ENCODE measurements at regions of chr1 and their contacts with region 1.

Region 1: DNA sequence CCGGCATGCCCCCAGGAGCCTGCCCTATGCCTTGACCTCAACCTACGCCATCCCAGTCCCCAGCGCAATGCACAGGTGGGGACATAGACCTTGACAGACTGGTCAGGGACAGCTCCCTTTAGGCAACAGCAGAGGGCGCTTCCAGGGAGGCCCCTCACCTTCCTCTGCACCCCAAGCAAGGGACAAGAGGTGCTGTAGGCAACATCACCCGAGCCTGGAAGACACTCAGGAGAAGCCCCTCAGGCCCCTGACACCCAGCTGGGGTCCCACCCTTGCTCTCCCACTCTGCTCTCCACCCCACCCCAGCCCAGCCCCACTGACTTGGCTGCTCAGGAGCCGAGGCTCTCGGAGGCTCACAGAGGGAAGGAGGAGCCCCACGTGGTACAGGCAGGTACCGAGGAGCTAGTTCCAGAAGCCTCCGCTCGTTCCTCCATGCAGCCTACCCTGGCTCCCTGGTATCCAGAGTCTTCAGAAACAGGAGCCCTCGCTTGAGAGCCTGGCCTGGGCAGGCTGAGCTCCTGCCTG is 2.4 kb upstream of the WNT3A start:
- DNase-seq: peak in 1 of 2 experiments; percentile 71
- H3K4me3 ChIP-seq: peak overlapping the region in 3 of 4 experiments; percentile 0 to 57 (median 10); a peak in 5 of 8 replicates
- H3K27ac ChIP-seq: no peak overlapping the region
- H3K4me1 ChIP-seq: peaks cover 0 to 43% (median 22%) of the 10 kb centered on the region in 4 experiments; a peak in 6 of 7 replicates
- H3K27me3 ChIP-seq: peaks cover 53 to 94% (median 69%) of the 10 kb centered on the region in 4 experiments
- CTCF ChIP-seq: peak in 2 of 3 experiments; percentile 77 to 90; a peak in 3 of 4 replicates
- EP300 ChIP-seq: no peak
- POLR2A ChIP-seq: no peak
- RAD21 ChIP-seq: peak; percentile 57 to 67

Region 2: DNA sequence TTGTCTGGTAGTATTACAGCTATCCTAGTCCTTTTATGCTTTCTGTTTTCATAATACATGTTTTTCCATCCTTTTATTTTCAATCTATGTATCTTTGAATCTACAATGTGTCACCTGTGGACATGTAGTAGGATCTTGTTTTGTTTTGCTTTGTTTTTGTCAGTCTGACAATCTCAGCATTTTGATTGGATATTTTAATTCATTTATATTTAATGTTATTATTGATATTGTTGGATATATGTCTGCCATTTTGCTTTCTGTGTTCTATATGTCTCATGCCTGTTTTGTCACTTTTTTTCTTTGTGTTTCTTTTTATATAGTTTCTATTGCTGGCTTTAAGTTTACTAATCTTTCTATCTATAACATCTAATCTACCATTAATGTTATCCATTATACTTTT is 200.5 kb before region 1 on chr1:
- CTCF ChIA-PET with region 1: no interaction called
- POLR2A ChIA-PET with region 1: no interaction called
- DNase-seq: no peak
- H3K4me3 ChIP-seq: no peak overlapping the region
- H3K27ac ChIP-seq: no peak overlapping the region
- H3K4me1 ChIP-seq: no peaks in the 10 kb centered on the region
- H3K27me3 ChIP-seq: 0 out of 7 replicates have a peak, but pooled peaks cover 0 to 3% (median 0%) of the 10 kb centered on the region in 4 experiments
- CTCF ChIP-seq: no peak
- EP300 ChIP-seq: no peak
- POLR2A ChIP-seq: no peak
- RAD21 ChIP-seq: no peak

Region 3: GRCh38 chr1:227823537-227823936 is 180.9 kb before region 1 on chr1:
- CTCF ChIA-PET with region 1: no interaction called
- POLR2A ChIA-PET with region 1: no interaction called
- DNase-seq: no peak
- H3K4me3 ChIP-seq: no peak overlapping the region
- H3K27ac ChIP-seq: no peak overlapping the region
- H3K4me1 ChIP-seq: no peaks in the 10 kb centered on the region
- H3K27me3 ChIP-seq: peaks cover 0 to 1% (median 0%) of the 10 kb centered on the region in 4 experiments; a peak in 1 of 7 replicates
- CTCF ChIP-seq: no peak
- EP300 ChIP-seq: no peak
- POLR2A ChIP-seq: no peak
- RAD21 ChIP-seq: no peak

Region 4: GRCh38 chr1:228023294-228023639 is 18.9 kb after region 1 on chr1:
- CTCF ChIA-PET with region 1: interaction called, 64 read pairs
- POLR2A ChIA-PET with region 1: no interaction called
- DNase-seq: no peak
- H3K4me3 ChIP-seq: no peak overlapping the region
- H3K27ac ChIP-seq: no peak overlapping the region
- H3K4me1 ChIP-seq: no peaks in the 10 kb centered on the region
- H3K27me3 ChIP-seq: peaks cover 0 to 11% (median 0%) of the 10 kb centered on the region in 4 experiments; a peak in 3 of 7 replicates
- CTCF ChIP-seq: no peak
- EP300 ChIP-seq: no peak
- POLR2A ChIP-seq: no peak
- RAD21 ChIP-seq: no peak

Region 5: DNA sequence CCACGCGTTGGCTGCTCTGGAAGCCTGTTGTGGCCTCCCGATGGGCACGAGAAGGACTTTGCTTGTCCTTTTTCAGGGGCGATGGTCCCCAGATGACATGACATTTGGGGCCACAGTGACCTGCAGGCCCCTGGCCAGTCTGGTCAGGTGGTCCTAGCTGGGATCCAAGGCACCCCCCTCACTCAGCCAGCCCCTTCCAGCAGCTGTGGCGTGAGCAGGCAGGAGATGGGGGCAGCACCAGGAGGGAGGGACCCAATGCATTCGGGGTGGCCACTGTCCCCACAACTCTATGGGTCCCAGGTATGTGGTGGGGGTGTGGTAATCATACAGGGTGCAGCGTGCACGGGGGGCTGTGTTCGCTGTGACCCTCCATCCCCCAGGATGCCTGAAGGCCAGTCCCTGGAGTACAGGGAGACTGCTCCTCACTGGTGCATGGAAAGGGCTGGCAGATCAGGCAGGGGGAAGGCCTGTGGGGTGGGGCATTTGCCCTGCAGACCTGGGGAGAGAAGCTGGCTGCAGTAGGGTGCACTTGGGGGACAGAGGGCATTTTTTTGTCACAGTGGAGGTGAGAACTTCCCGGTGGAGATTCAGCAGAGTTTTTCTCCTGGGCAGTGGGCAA is 34.1 kb after region 1 on chr1:
- CTCF ChIA-PET with region 1: interaction called, 22 read pairs
- POLR2A ChIA-PET with region 1: no interaction called
- DNase-seq: peak in 1 of 2 experiments; percentile 39
- H3K4me3 ChIP-seq: peak overlapping the region; percentile 25 to 62 (median 40); a peak in 6 of 8 replicates
- H3K27ac ChIP-seq: no peak overlapping the region
- H3K4me1 ChIP-seq: peaks cover 0 to 13% (median 7%) of the 10 kb centered on the region in 4 experiments; a peak in 6 of 7 replicates
- H3K27me3 ChIP-seq: peaks cover 10 to 60% (median 45%) of the 10 kb centered on the region in 4 experiments
- CTCF ChIP-seq: no peak
- EP300 ChIP-seq: no peak
- POLR2A ChIP-seq: no peak
- RAD21 ChIP-seq: no peak

Region 6: GRCh38 chr1:228073857-228074545 is 69.6 kb after region 1 on chr1:
- CTCF ChIA-PET with region 1: interaction called, 115 read pairs
- POLR2A ChIA-PET with region 1: interaction called, 5 read pairs
- DNase-seq: peak in 1 of 2 experiments; percentile 74
- H3K4me3 ChIP-seq: no peak overlapping the region
- H3K27ac ChIP-seq: no peak overlapping the region
- H3K4me1 ChIP-seq: peaks cover 0 to 14% (median 0%) of the 10 kb centered on the region in 4 experiments; a peak in 4 of 7 replicates
- H3K27me3 ChIP-seq: peaks cover 20 to 84% (median 81%) of the 10 kb centered on the region in 4 experiments
- CTCF ChIP-seq: peak; percentile 59 to 72 (median 66)
- EP300 ChIP-seq: no peak
- POLR2A ChIP-seq: no peak
- RAD21 ChIP-seq: peak; percentile 82

Region 7: GRCh38 chr1:228087771-228088251 is 83.4 kb after region 1 on chr1:
- CTCF ChIA-PET with region 1: interaction called, 21 read pairs
- POLR2A ChIA-PET with region 1: interaction called, 4 read pairs
- DNase-seq: no peak
- H3K4me3 ChIP-seq: no peak overlapping the region
- H3K27ac ChIP-seq: no peak overlapping the region
- H3K4me1 ChIP-seq: peaks cover 4 to 15% (median 10%) of the 10 kb centered on the region in 4 experiments
- H3K27me3 ChIP-seq: no peaks in the 10 kb centered on the region
- CTCF ChIP-seq: no peak
- EP300 ChIP-seq: no peak
- POLR2A ChIP-seq: no peak
- RAD21 ChIP-seq: no peak